Gastrocnemius medialis (tissue), 4 donors: ENCODE measurements at regions of chr15 and their contacts with region 1.

Region 1: GRCh38 chr15:99059010-99059981 is 45.6 kb upstream of the SYNM start:
- DNase-seq: peak; percentile 48 to 70
- ATAC-seq: peak; percentile 55 to 66
- H3K4me3 ChIP-seq: peak overlapping the region; percentile 48 to 73 (median 51)
- H3K27ac ChIP-seq: peak overlapping the region; percentile 72 to 91 (median 82)
- H3K4me1 ChIP-seq: peaks cover 22 to 24% of the 10 kb centered on the region in 2 donors
- H3K27me3 ChIP-seq: no peaks in the 10 kb centered on the region
- CTCF ChIP-seq: peak in 4 of 5 experiments; percentile 74 to 94 (median 92)
- POLR2A ChIP-seq: peak in 1 of 2 donors; percentile 11

Region 2: GRCh38 chr15:98518823-98519561 is 540.3 kb before region 1 on chr15:
- in situ Hi-C with region 1: no loop called
- intact Hi-C with region 1: loop called (anchors 5 kb)
- DNase-seq: no peak
- ATAC-seq: peak; percentile 68 to 82
- H3K4me3 ChIP-seq: no peak overlapping the region
- H3K27ac ChIP-seq: no peak overlapping the region
- H3K4me1 ChIP-seq: no peaks in the 10 kb centered on the region
- H3K27me3 ChIP-seq: no peaks in the 10 kb centered on the region
- CTCF ChIP-seq: peak; percentile 67 to 90 (median 79)
- POLR2A ChIP-seq: no peak

Region 3: DNA sequence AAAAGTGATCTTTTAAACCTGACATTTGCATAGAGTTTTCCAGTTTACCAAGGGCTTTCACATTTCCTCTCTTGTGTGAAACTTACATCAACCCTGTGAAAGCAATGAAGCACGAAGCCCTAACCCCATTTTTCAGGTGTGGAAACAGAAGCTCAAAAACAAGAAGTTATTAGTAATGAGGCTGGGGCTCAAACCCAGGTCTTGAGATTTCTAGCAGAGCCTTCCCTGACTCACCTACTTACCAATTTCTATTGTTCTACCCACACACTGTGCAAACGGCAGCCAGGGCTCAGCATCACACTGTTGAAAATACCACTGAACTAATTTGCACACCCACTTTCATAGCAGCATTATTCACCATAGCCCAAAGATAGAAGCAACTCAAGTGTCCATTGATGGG is 528.7 kb before region 1 on chr15:
- in situ Hi-C with region 1: no loop called
- intact Hi-C with region 1: no loop called
- DNase-seq: no peak
- ATAC-seq: no peak
- H3K4me3 ChIP-seq: no peak overlapping the region
- H3K27ac ChIP-seq: no peak overlapping the region
- H3K4me1 ChIP-seq: no peaks in the 10 kb centered on the region
- H3K27me3 ChIP-seq: peaks cover 13 to 15% (median 13%) of the 10 kb centered on the region in 3 donors
- CTCF ChIP-seq: no peak
- POLR2A ChIP-seq: no peak

Region 4: DNA sequence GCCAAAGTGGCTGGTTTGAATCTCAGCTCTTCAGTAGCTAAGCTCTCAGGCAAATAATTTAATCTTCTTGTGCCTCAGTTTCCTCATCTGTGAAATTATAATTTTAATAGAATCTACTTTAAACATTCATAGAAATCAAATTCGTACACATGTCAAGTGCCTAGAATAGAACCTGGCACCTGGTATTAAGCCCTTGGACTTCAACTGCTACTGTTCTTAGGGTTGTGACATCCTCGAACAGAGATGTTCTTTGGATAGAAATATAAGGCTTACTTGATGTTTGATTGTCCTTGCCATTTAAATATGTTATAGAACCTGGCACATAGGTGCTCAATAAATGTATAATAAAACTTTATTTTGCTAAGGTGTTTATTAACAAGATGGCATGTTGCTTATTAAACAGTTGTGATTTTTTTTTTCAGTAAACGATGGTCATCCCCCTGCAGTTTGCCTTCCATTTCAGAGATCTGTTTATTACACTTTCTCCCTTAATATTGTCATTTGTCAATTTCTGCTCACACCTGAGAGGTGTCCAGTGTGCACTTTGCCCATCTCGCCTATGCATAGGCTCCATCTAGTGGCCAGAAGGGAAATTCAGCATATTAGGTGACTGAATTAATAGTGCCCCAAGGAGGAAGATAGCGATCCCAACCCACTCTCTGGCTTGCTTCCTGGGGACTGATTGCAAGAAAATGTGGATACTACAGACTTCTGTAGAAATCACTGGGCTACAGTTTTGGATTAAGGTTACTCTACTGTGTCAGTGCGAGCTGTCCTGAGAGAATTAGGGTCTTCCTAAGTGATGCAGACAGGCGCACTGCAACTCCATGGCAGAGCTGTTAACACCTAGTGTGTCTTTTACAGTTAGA is 400.2 kb before region 1 on chr15:
- in situ Hi-C with region 1: loop called in 2 of 4 experiments (anchors 25 kb)
- intact Hi-C with region 1: no loop called
- DNase-seq: peak; percentile 20
- ATAC-seq: peak; percentile 89 to 92
- H3K4me3 ChIP-seq: peak overlapping the region in 1 of 4 donors; percentile 33
- H3K27ac ChIP-seq: peak overlapping the region in 1 of 4 donors; percentile 36
- H3K4me1 ChIP-seq: peaks cover 32 to 59% of the 10 kb centered on the region in 2 donors
- H3K27me3 ChIP-seq: no peaks in the 10 kb centered on the region
- CTCF ChIP-seq: peak; percentile 41 to 86 (median 69)
- POLR2A ChIP-seq: no peak

Region 5: DNA sequence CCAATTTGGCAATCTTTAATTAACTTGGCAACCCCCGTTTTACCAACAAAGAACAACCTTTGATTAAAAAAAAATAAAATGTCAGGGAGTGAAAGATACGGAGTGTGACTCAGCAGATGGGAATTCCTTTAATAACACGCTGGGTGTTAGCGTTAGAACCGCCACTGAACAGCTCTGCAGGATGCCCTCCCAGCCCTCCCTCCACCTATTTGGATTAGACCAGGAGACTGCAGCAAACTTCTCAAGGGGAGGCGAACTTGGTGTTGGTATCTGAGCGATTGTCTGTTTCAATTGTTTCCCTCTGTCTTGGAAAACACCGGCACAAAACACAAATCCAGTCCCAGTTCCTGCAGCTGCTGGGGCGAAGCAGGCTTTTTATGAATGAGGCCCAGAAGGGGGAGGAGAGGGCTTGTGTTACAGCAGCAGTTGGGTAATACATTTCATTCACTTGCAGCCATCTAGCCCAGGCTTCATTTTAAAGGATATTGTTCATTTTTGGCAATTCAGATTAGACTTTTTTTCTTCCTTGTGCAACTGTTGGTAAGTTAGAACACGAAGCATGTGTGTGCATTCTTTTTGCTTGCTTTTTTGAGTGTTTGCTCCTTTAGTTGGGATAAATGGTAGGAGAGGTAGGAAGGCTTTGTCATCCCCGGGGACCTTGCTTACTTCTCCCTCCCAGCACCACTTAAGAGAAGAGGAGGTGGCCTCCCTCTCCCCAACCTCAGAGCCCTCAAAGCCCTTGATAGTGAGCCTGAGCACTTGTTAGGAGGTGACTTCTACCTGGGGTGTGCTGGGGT is 258.7 kb before region 1 on chr15:
- in situ Hi-C with region 1: no loop called
- intact Hi-C with region 1: loop called (anchors 5 kb)
- DNase-seq: peak; percentile 20 to 37
- ATAC-seq: peak; percentile 91 to 93
- H3K4me3 ChIP-seq: peak overlapping the region in 3 of 4 donors; percentile 17 to 31 (median 25)
- H3K27ac ChIP-seq: peak overlapping the region in 1 of 4 donors; percentile 27
- H3K4me1 ChIP-seq: peaks cover 27 to 37% of the 10 kb centered on the region in 2 donors
- H3K27me3 ChIP-seq: no peaks in the 10 kb centered on the region
- CTCF ChIP-seq: no peak
- POLR2A ChIP-seq: no peak

Region 6: DNA sequence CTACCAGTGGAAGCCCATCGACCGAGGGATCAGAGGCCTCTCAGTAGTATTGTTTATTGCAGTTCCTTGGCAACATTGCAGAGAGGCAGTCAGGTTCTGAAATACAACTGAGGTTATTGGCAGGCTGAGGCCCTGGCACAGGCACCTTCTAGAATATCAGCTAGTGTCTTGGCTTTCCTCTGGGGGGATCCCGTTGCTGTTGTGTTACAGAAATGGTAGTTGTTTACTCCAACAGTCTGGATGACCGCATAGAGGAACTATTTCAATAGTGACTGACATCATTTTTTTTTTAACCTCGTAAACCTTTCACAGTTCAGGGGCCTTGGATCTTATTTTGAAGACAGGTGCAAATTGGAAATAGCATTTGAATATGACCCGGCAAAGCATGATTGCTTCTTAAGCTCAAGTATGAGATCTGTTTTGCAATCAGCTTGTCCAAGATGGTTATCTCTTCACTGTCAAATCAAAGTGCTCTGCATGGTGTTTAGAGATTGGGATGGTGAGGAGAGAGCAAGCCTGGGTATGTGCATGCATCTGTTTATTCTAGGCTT is 115.6 kb before region 1 on chr15:
- in situ Hi-C with region 1: loop called in 3 of 4 experiments (anchors 5 to 10 kb)
- intact Hi-C with region 1: loop called (anchors 1 kb)
- DNase-seq: peak; percentile 92 to 94
- ATAC-seq: peak; percentile 83 to 90
- H3K4me3 ChIP-seq: no peak overlapping the region
- H3K27ac ChIP-seq: peak overlapping the region; percentile 82 to 96 (median 90)
- H3K4me1 ChIP-seq: peaks cover 51 to 67% of the 10 kb centered on the region in 2 donors
- H3K27me3 ChIP-seq: no peaks in the 10 kb centered on the region
- CTCF ChIP-seq: no peak
- POLR2A ChIP-seq: peak in 1 of 2 donors; percentile 6

Region 7: DNA sequence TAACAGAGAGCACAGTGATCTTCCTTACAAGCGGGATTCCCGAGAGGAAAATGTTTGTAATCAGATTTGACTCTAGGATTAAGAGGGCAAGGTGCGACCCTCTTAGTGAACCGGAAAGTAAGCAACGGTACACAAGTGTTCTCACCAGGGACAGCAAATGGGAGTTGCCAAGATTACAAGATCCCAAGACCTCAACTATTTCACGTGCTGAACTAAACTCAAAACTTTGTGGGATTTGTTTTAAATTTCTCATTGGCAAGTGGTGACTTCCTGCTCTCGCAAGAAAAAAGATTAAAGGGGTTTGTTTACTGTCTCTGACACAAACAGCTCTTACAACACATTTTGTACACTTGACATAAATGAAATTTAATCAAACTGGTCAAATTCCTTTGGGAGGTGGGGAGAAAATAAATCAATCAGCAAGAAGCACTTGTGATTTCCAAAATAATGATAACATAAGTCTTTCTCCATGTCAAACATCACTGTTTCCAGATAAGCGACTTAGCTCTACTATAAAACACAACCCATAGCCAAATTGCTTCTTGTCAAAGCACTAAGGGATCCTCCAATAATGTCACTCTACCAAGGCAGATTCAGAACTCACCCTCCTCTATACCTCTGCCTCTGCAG is 49.4 kb before region 1 on chr15:
- in situ Hi-C with region 1: no loop called
- intact Hi-C with region 1: loop called (anchors 5 kb)
- DNase-seq: no peak
- ATAC-seq: no peak
- H3K4me3 ChIP-seq: no peak overlapping the region
- H3K27ac ChIP-seq: peak overlapping the region in 2 of 4 donors; percentile 1 to 24
- H3K4me1 ChIP-seq: peaks cover 10 to 13% of the 10 kb centered on the region in 2 donors
- H3K27me3 ChIP-seq: no peaks in the 10 kb centered on the region
- CTCF ChIP-seq: no peak
- POLR2A ChIP-seq: no peak

Region 8: DNA sequence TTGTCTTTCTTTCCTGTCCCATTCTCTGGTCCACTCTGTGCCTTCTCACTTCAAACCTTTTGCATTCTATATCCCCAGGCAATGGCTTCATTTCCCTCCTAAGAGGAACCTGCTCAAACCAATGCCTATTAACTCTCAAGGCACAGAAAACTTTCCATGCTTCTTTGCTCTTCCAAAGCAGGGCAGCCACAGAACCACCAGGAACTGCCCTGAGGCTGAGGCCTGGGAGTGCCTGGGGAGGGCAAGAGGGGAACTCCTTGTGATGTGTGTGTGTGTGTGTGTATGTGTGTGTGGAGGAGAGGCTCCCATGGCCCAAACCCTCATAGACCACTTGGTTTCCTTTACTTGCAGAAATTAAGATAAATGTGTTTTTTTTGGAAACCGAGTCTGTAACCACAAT is 37.6 kb before region 1 on chr15:
- in situ Hi-C with region 1: no loop called
- intact Hi-C with region 1: no loop called
- DNase-seq: no peak
- ATAC-seq: no peak
- H3K4me3 ChIP-seq: no peak overlapping the region
- H3K27ac ChIP-seq: no peak overlapping the region
- H3K4me1 ChIP-seq: peaks cover 8 to 12% of the 10 kb centered on the region in 2 donors
- H3K27me3 ChIP-seq: no peaks in the 10 kb centered on the region
- CTCF ChIP-seq: no peak
- POLR2A ChIP-seq: no peak